Activated CD4-positive, alpha-beta memory T cell treated with anti-CD3 and anti-CD28 coated beads, Interleukin-2, amount 10 ng/mL, durations not matched to agents 7 days and 5 days (primary cell): ENCODE measurements at regions of chr7 and their contacts with region 1.

Region 1: GRCh38 chr7:119175911-119176627 is 951.6 kb downstream of the ANKRD7 start:
- DNase-seq: peak; percentile 26
- H3K4me3 Mint-ChIP-seq: no peak overlapping the region
- H3K27ac Mint-ChIP-seq: no peak overlapping the region
- H3K4me1 Mint-ChIP-seq: no peaks in the 10 kb centered on the region
- H3K27me3 Mint-ChIP-seq: no peaks in the 10 kb centered on the region

Region 2: DNA sequence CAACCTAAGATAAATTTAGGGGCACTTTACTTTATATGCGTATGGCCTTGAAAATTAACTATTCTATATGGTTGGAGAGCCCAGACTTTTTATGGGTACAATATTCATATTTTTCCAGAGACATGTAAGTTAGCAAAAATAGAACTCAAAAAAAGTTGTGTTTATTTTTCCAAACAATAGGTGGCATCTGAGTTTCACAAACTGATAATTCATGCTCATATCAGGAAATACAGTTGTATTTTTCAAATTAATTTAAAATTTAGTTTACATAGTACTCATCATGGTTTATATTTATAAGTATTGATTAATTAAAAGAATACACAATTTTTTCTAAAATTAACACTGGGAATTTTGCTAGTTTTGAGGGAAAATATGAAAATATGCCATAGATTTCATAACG is 917.0 kb before region 1 on chr7:
- CTCF ChIA-PET with region 1: interaction called, 11 read pairs
- POLR2A ChIA-PET with region 1: no interaction called
- DNase-seq: no peak
- H3K4me3 Mint-ChIP-seq: no peak overlapping the region
- H3K27ac Mint-ChIP-seq: no peak overlapping the region
- H3K4me1 Mint-ChIP-seq: no peaks in the 10 kb centered on the region
- H3K27me3 Mint-ChIP-seq: peaks cover 3% of the 10 kb centered on the region